ENCODE measurements at regions of chr14 and their contacts with region 1.

Region 1: GRCh38 chr14:100192672-100193416 is 33.4 kb upstream of the DEGS2 start:
- DNase-seq: peak; percentile 100
- ATAC-seq: peak; percentile 98
- H3K4me3 ChIP-seq: peak overlapping the region; percentile 3 to 63 (median 52)
- H3K4me3 Mint-ChIP-seq: peak overlapping the region; percentile 76
- H3K27ac ChIP-seq: peak overlapping the region; percentile 88
- H3K27ac Mint-ChIP-seq: peak overlapping the region; percentile 96
- H3K4me1 ChIP-seq: peaks cover 10 to 14% of the 10 kb centered on the region in 2 donors
- H3K4me1 Mint-ChIP-seq: peaks cover 9% of the 10 kb centered on the region
- H3K27me3 ChIP-seq: no peaks in the 10 kb centered on the region
- H3K27me3 Mint-ChIP-seq: no peaks in the 10 kb centered on the region
- CTCF ChIP-seq: peak; percentile 94

Region 2: GRCh38 chr14:100056964-100057795 is 135.7 kb before region 1 on chr14:
- CTCF ChIA-PET with region 1: interaction called, 33 read pairs
- POLR2A ChIA-PET with region 1: no interaction called
- intact Hi-C with region 1: loop called (anchors 1 kb)
- DNase-seq: peak; percentile 66
- ATAC-seq: peak; percentile 77
- H3K4me3 ChIP-seq: no peak overlapping the region
- H3K4me3 Mint-ChIP-seq: no peak overlapping the region
- H3K27ac ChIP-seq: no peak overlapping the region
- H3K27ac Mint-ChIP-seq: peak overlapping the region; percentile 57
- H3K4me1 ChIP-seq: peaks cover 16% of the 10 kb centered on the region in 2 donors
- H3K4me1 Mint-ChIP-seq: peaks cover 31% of the 10 kb centered on the region
- H3K27me3 ChIP-seq: no peaks in the 10 kb centered on the region
- H3K27me3 Mint-ChIP-seq: no peaks in the 10 kb centered on the region
- CTCF ChIP-seq: peak; percentile 69

Region 3: DNA sequence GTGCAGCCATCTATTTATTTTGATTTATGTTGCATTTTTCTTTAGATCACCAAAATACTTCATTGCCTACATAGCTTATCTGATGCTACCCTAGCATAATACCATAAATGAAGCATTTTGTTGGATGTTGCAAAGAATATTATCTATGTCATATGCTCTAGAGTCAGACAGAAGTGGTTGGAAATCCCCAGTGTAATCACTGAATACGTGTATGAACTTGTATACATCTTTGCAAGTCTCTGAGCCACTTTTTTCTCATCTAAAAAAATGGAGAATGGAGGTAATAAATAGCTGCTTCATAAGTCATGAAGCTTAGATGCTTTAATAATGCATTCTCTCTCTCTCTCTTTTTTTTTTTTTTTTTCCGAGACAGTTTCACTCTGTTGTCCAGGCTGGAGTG is 109.1 kb before region 1 on chr14:
- CTCF ChIA-PET with region 1: no interaction called
- POLR2A ChIA-PET with region 1: no interaction called
- intact Hi-C with region 1: no loop called
- DNase-seq: no peak
- ATAC-seq: no peak
- H3K4me3 ChIP-seq: no peak overlapping the region
- H3K4me3 Mint-ChIP-seq: no peak overlapping the region
- H3K27ac ChIP-seq: no peak overlapping the region
- H3K27ac Mint-ChIP-seq: peak overlapping the region; percentile 3
- H3K4me1 ChIP-seq: peaks cover 39 to 40% of the 10 kb centered on the region in 2 donors
- H3K4me1 Mint-ChIP-seq: peaks cover 49% of the 10 kb centered on the region
- H3K27me3 ChIP-seq: no peaks in the 10 kb centered on the region
- H3K27me3 Mint-ChIP-seq: no peaks in the 10 kb centered on the region
- CTCF ChIP-seq: no peak

Region 4: GRCh38 chr14:100108042-100108825 is 84.6 kb before region 1 on chr14:
- CTCF ChIA-PET with region 1: interaction called, 31 read pairs
- POLR2A ChIA-PET with region 1: no interaction called
- intact Hi-C with region 1: loop called (anchors 1 kb)
- DNase-seq: peak; percentile 82
- ATAC-seq: peak; percentile 85
- H3K4me3 ChIP-seq: no peak overlapping the region
- H3K4me3 Mint-ChIP-seq: no peak overlapping the region
- H3K27ac ChIP-seq: peak overlapping the region; percentile 27 to 56
- H3K27ac Mint-ChIP-seq: peak overlapping the region; percentile 84
- H3K4me1 ChIP-seq: peaks cover 12 to 32% of the 10 kb centered on the region in 2 donors
- H3K4me1 Mint-ChIP-seq: peaks cover 51% of the 10 kb centered on the region
- H3K27me3 ChIP-seq: no peaks in the 10 kb centered on the region
- H3K27me3 Mint-ChIP-seq: no peaks in the 10 kb centered on the region
- CTCF ChIP-seq: peak; percentile 82

Region 5: GRCh38 chr14:100155042-100155846 is 37.6 kb before region 1 on chr14:
- CTCF ChIA-PET with region 1: interaction called, 11 read pairs
- POLR2A ChIA-PET with region 1: interaction called, 3 read pairs
- intact Hi-C with region 1: loop called (anchors 2 kb)
- DNase-seq: no peak
- ATAC-seq: no peak
- H3K4me3 ChIP-seq: no peak overlapping the region
- H3K4me3 Mint-ChIP-seq: no peak overlapping the region
- H3K27ac ChIP-seq: no peak overlapping the region
- H3K27ac Mint-ChIP-seq: peak overlapping the region; percentile 53
- H3K4me1 ChIP-seq: peaks cover 29 to 39% of the 10 kb centered on the region in 2 donors
- H3K4me1 Mint-ChIP-seq: peaks cover 33% of the 10 kb centered on the region
- H3K27me3 ChIP-seq: peaks cover 0 to 2% (median 0%) of the 10 kb centered on the region in 4 experiments
- H3K27me3 Mint-ChIP-seq: no peaks in the 10 kb centered on the region
- CTCF ChIP-seq: peak; percentile 65

Region 6: GRCh38 chr14:100213956-100214774 is 21.3 kb after region 1 on chr14:
- CTCF ChIA-PET with region 1: interaction called, 37 read pairs
- POLR2A ChIA-PET with region 1: interaction called, 5 read pairs
- intact Hi-C with region 1: loop called (anchors 1 kb)
- DNase-seq: peak; percentile 92
- ATAC-seq: peak; percentile 96
- H3K4me3 ChIP-seq: peak overlapping the region; percentile 17 to 91 (median 90)
- H3K4me3 Mint-ChIP-seq: peak overlapping the region; percentile 87
- H3K27ac ChIP-seq: peak overlapping the region; percentile 77 to 78
- H3K27ac Mint-ChIP-seq: peak overlapping the region; percentile 89
- H3K4me1 ChIP-seq: peaks cover 12 to 15% of the 10 kb centered on the region in 2 donors
- H3K4me1 Mint-ChIP-seq: peaks cover 16% of the 10 kb centered on the region
- H3K27me3 ChIP-seq: no peaks in the 10 kb centered on the region
- H3K27me3 Mint-ChIP-seq: no peaks in the 10 kb centered on the region
- CTCF ChIP-seq: no peak

Region 7: GRCh38 chr14:100239840-100240724 is 47.2 kb after region 1 on chr14:
- CTCF ChIA-PET with region 1: interaction called, 13 read pairs
- POLR2A ChIA-PET with region 1: interaction called, 4 read pairs
- intact Hi-C with region 1: loop called (anchors 1 kb)
- DNase-seq: peak; percentile 93
- ATAC-seq: peak; percentile 52
- H3K4me3 ChIP-seq: peak overlapping the region; percentile 72 to 91 (median 87)
- H3K4me3 Mint-ChIP-seq: peak overlapping the region; percentile 87
- H3K27ac ChIP-seq: peak overlapping the region; percentile 55 to 97
- H3K27ac Mint-ChIP-seq: peak overlapping the region; percentile 95
- H3K4me1 ChIP-seq: peaks cover 38 to 47% of the 10 kb centered on the region in 2 donors
- H3K4me1 Mint-ChIP-seq: peaks cover 55% of the 10 kb centered on the region
- H3K27me3 ChIP-seq: no peaks in the 10 kb centered on the region
- H3K27me3 Mint-ChIP-seq: no peaks in the 10 kb centered on the region
- CTCF ChIP-seq: peak; percentile 67

Region 8: DNA sequence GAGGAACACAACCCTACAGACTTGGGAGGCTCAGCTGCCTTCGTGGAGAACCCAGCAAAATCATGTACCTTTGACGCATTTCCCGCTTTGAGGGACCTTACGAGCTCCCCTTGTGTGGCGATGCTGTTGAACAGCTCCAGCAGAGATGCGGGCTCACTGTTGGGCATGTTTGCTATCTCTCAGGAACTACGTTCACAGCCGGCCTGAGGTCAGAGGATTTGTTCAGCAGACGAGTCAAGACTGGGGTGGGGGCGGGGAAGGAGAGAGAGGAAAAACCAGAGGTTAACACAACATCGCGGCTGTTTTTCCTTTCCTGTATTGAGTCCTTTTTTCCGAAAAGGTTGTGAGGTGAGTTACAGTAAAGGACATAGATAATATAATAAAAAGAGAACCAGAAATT is 176.2 kb after region 1 on chr14:
- CTCF ChIA-PET with region 1: no interaction called
- POLR2A ChIA-PET with region 1: no interaction called
- intact Hi-C with region 1: no loop called
- DNase-seq: no peak
- ATAC-seq: no peak
- H3K4me3 ChIP-seq: no peak overlapping the region
- H3K4me3 Mint-ChIP-seq: no peak overlapping the region
- H3K27ac ChIP-seq: no peak overlapping the region
- H3K27ac Mint-ChIP-seq: no peak overlapping the region
- H3K4me1 ChIP-seq: peaks cover 0 to 17% of the 10 kb centered on the region in 2 donors
- H3K4me1 Mint-ChIP-seq: peaks cover 9% of the 10 kb centered on the region
- H3K27me3 ChIP-seq: no peaks in the 10 kb centered on the region
- H3K27me3 Mint-ChIP-seq: no peaks in the 10 kb centered on the region
- CTCF ChIP-seq: no peak

Measured in B cell (primary cell).